ENCODE measurements at regions of chr22 and their contacts with region 1.

Region 1: GRCh38 chr22:24951942-24952836 is at the start of gene KIAA1671:
- DNase-seq: peak; percentile 92
- ATAC-seq: peak; percentile 98
- total RNA-seq, gene KIAA1671: 11.6 TPM

Region 2: GRCh38 chr22:25048659-25049647 is 96.8 kb after region 1 on chr22:
- intact Hi-C with region 1: loop called (anchors 2 kb)
- DNase-seq: peak; percentile 74
- ATAC-seq: peak; percentile 83

Measured in left ventricle myocardium superior (tissue), 1 donor.